ENCODE measurements at regions of chr2 and their contacts with region 1.

Region 1: DNA sequence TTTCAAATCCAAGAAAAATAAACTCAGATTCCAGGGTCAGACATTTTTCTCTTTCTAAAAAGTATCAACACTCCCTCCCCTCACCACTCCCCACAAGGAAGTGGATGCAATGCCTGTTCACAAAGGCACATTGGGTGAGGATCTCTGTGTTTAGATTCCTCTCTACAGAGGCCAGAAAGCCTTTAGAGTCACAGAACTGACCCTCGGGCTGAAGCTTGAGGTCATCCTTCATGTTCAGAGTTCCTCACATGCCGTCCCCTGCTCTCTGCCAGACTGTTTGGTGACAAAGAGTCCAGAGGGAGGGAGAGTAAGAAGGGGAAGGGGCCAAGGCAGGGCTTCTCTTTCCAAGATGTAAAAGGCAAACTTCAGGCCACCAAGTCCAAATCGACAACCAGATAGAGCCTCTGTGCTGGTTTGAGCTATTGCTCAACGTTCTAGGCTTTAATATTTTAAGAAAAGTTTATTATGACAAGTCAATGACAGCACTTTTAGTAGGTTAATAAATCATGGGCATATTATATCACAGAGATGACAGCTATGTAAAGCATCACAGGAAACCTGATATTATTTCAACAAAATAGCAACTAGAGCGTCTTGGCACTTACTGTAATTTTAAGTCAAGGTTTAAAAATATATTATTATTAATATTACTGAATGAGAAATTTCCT is 269.4 kb downstream of the ETAA1 start:
- DNase-seq: peak; percentile 15
- ATAC-seq: peak; percentile 66
- H3K4me3 ChIP-seq: no peak overlapping the region
- H3K27ac ChIP-seq: peak overlapping the region; percentile 65; the same call in 1 of the 2 replicates
- H3K4me1 ChIP-seq: peaks cover 7% of the 10 kb centered on the region
- H3K27me3 ChIP-seq: no peaks in the 10 kb centered on the region
- CTCF ChIP-seq: no peak
- POLR2A ChIP-seq: no peak
- RAD21 ChIP-seq: no peak

Region 2: GRCh38 chr2:66429071-66429477 is 1237.4 kb before region 1 on chr2:
- CTCF ChIA-PET with region 1: no interaction called
- POLR2A ChIA-PET with region 1: no interaction called
- dilution Hi-C with region 1: no loop called
- in situ Hi-C with region 1: no loop called
- intact Hi-C with region 1: loop called (anchors 5 kb)
- DNase-seq: peak; percentile 79
- ATAC-seq: peak; percentile 19; the same call in 1 of the 2 replicates
- H3K4me3 ChIP-seq: no peak overlapping the region
- H3K27ac ChIP-seq: no peak overlapping the region
- H3K4me1 ChIP-seq: peaks cover 5% of the 10 kb centered on the region; the same call in 1 of the 2 replicates
- H3K27me3 ChIP-seq: peaks cover 6% of the 10 kb centered on the region; the same call in 1 of the 2 replicates
- CTCF ChIP-seq: peak; percentile 86
- POLR2A ChIP-seq: 0 out of 2 replicates have a peak, but pooled peaks have one; percentile 24
- RAD21 ChIP-seq: peak; percentile 88

Measured in IMR-90 (cell line).